B cell (primary cell): ENCODE measurements at regions of chr7 and their contacts with region 1.

Region 1: GRCh38 chr7:28096713-28097112 is 83.9 kb downstream of the JAZF1 start:
- DNase-seq: peak; percentile 69
- ATAC-seq: peak; percentile 68
- H3K4me3 ChIP-seq: no peak overlapping the region
- H3K4me3 Mint-ChIP-seq: no peak overlapping the region
- H3K27ac ChIP-seq: no peak overlapping the region
- H3K27ac Mint-ChIP-seq: no peak overlapping the region
- H3K4me1 ChIP-seq: peaks cover 13 to 14% of the 10 kb centered on the region in 2 donors
- H3K4me1 Mint-ChIP-seq: peaks cover 38% of the 10 kb centered on the region
- H3K27me3 ChIP-seq: no peaks in the 10 kb centered on the region
- H3K27me3 Mint-ChIP-seq: no peaks in the 10 kb centered on the region
- CTCF ChIP-seq: peak; percentile 99

Region 2: GRCh38 chr7:27714831-27715444 is 381.8 kb before region 1 on chr7:
- CTCF ChIA-PET with region 1: no interaction called
- POLR2A ChIA-PET with region 1: no interaction called
- intact Hi-C with region 1: no loop called
- DNase-seq: no peak
- ATAC-seq: no peak
- H3K4me3 ChIP-seq: no peak overlapping the region
- H3K4me3 Mint-ChIP-seq: no peak overlapping the region
- H3K27ac ChIP-seq: no peak overlapping the region
- H3K27ac Mint-ChIP-seq: no peak overlapping the region
- H3K4me1 ChIP-seq: no peaks in the 10 kb centered on the region
- H3K4me1 Mint-ChIP-seq: peaks cover 2% of the 10 kb centered on the region
- H3K27me3 ChIP-seq: peaks cover 0 to 3% (median 0%) of the 10 kb centered on the region in 4 experiments
- H3K27me3 Mint-ChIP-seq: peaks cover 13% of the 10 kb centered on the region
- CTCF ChIP-seq: no peak

Region 3: DNA sequence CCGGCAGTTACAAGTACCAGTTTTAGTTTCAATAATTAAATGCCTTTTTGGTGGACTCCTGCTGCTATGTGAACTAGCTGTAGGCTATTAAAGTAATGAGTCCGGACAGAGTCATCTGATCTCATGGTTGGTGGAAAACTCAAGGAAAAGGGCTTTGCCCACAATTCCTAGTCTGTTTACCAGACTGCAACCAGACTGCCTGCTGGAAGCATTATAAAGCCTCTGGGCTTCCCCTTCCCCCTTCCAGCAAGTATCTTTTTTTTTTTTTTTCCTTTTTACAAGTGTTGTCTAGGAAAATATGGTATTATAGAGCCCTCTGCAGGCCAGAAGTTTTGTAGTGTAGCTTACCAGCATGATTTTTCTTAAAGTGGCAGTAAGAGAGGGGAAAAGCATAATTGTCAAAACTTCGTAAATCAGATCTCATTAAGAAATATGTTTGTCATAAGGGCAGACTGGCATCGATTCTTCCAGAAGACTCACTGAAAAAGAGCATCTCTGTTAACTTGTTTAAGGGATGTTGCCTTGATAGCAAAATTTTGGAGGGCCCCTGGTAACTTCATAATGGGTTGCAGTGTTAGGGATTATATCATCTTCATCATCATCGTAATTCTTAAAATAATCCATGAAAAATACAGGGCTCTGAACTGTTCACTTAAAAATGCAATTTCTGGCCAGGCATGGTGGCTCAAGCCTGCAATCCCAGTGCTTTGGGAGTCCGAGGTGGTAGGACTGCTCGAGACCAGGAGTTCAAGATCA is 175.5 kb before region 1 on chr7:
- CTCF ChIA-PET with region 1: interaction called, 3 read pairs
- POLR2A ChIA-PET with region 1: no interaction called
- intact Hi-C with region 1: loop called (anchors 10 kb)
- DNase-seq: peak; percentile 68
- ATAC-seq: peak; percentile 60
- H3K4me3 ChIP-seq: no peak overlapping the region
- H3K4me3 Mint-ChIP-seq: no peak overlapping the region
- H3K27ac ChIP-seq: no peak overlapping the region
- H3K27ac Mint-ChIP-seq: no peak overlapping the region
- H3K4me1 ChIP-seq: peaks cover 35 to 39% of the 10 kb centered on the region in 2 donors
- H3K4me1 Mint-ChIP-seq: peaks cover 67% of the 10 kb centered on the region
- H3K27me3 ChIP-seq: no peaks in the 10 kb centered on the region
- H3K27me3 Mint-ChIP-seq: no peaks in the 10 kb centered on the region
- CTCF ChIP-seq: peak; percentile 71

Region 4: DNA sequence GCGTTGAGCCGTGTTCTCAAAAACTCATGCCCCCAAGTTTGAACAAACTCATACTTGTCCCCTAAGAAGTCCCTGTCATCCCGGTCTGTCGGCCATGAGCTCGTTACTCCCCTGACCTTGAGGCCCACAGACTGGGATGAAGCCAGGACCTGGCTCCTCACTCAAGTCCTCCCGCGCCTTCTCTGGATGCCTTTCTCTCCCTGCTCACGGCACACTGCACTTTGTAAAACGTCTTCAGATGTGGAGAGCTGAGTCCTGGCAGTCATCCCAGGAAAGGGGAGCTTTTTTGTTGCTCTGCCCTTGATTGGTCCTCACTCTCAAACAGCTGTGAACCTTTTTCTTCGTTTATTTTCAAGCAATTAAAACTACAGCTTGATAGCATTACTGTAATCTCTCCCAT is 26.9 kb before region 1 on chr7:
- CTCF ChIA-PET with region 1: interaction called, 10 read pairs
- POLR2A ChIA-PET with region 1: no interaction called
- intact Hi-C with region 1: no loop called
- DNase-seq: no peak
- ATAC-seq: no peak
- H3K4me3 ChIP-seq: no peak overlapping the region
- H3K4me3 Mint-ChIP-seq: no peak overlapping the region
- H3K27ac ChIP-seq: no peak overlapping the region
- H3K27ac Mint-ChIP-seq: no peak overlapping the region
- H3K4me1 ChIP-seq: peaks cover 0 to 6% of the 10 kb centered on the region in 2 donors
- H3K4me1 Mint-ChIP-seq: peaks cover 41% of the 10 kb centered on the region
- H3K27me3 ChIP-seq: no peaks in the 10 kb centered on the region
- H3K27me3 Mint-ChIP-seq: no peaks in the 10 kb centered on the region
- CTCF ChIP-seq: no peak

Region 5: DNA sequence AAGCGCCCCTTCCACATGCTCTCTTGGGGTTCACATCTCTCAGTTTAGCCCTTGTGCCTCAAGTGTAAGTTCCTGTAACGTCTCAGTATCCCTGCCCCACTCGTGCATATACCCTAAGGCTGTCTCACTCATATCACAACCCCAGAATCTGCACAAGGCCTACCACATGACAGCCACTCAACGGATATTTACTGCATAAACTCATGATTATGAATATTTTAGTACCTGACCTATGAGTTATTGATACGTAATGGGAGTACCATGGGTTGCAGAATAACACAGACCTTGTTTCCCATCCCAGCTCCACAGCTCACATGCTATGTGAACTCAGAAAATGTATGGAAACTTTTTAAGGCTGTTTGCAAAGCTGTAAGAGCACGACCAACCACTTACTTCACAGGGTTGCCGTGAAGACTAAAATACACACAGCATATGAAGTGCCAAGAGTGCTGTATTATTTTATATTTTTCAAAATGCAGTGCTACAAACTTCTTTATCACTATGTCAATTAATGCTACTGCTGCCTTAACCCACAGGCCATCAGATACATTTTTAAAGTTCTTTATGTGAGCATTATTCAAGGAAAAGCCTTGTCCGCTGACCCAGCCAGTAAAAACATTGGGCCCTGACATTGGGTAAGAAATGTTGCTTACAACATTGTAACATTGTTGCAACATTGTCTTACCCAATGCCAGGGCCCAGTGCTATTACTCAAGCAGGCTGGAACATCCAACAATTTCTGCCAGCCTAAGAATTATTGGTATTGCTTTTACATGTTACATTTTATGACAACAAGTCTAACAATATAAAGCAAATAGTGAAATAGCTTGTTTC is 13.3 kb before region 1 on chr7:
- CTCF ChIA-PET with region 1: interaction called, 60 read pairs
- POLR2A ChIA-PET with region 1: no interaction called
- intact Hi-C with region 1: no loop called
- DNase-seq: no peak
- ATAC-seq: no peak
- H3K4me3 ChIP-seq: no peak overlapping the region
- H3K4me3 Mint-ChIP-seq: no peak overlapping the region
- H3K27ac ChIP-seq: no peak overlapping the region
- H3K27ac Mint-ChIP-seq: no peak overlapping the region
- H3K4me1 ChIP-seq: peaks cover 19 to 26% of the 10 kb centered on the region in 2 donors
- H3K4me1 Mint-ChIP-seq: peaks cover 64% of the 10 kb centered on the region
- H3K27me3 ChIP-seq: no peaks in the 10 kb centered on the region
- H3K27me3 Mint-ChIP-seq: no peaks in the 10 kb centered on the region
- CTCF ChIP-seq: no peak

Region 6: GRCh38 chr7:28130277-28130676 is 33.6 kb after region 1 on chr7:
- CTCF ChIA-PET with region 1: interaction called, 15 read pairs
- POLR2A ChIA-PET with region 1: no interaction called
- intact Hi-C with region 1: no loop called
- DNase-seq: no peak
- ATAC-seq: no peak
- H3K4me3 ChIP-seq: no peak overlapping the region
- H3K4me3 Mint-ChIP-seq: no peak overlapping the region
- H3K27ac ChIP-seq: no peak overlapping the region
- H3K27ac Mint-ChIP-seq: no peak overlapping the region
- H3K4me1 ChIP-seq: peaks cover 43 to 62% of the 10 kb centered on the region in 2 donors
- H3K4me1 Mint-ChIP-seq: peaks cover 70% of the 10 kb centered on the region
- H3K27me3 ChIP-seq: no peaks in the 10 kb centered on the region
- H3K27me3 Mint-ChIP-seq: no peaks in the 10 kb centered on the region
- CTCF ChIP-seq: no peak

Region 7: GRCh38 chr7:28179120-28180030 is 82.7 kb after region 1 on chr7:
- CTCF ChIA-PET with region 1: interaction called, 7 read pairs
- POLR2A ChIA-PET with region 1: no interaction called
- intact Hi-C with region 1: loop called (anchors 5 kb)
- DNase-seq: peak; percentile 87
- ATAC-seq: peak; percentile 69
- H3K4me3 ChIP-seq: peak overlapping the region; percentile 35 to 70 (median 53)
- H3K4me3 Mint-ChIP-seq: peak overlapping the region; percentile 83
- H3K27ac ChIP-seq: peak overlapping the region; percentile 5 to 76
- H3K27ac Mint-ChIP-seq: peak overlapping the region; percentile 75
- H3K4me1 ChIP-seq: peaks cover 49 to 70% of the 10 kb centered on the region in 2 donors
- H3K4me1 Mint-ChIP-seq: peaks cover 71% of the 10 kb centered on the region
- H3K27me3 ChIP-seq: no peaks in the 10 kb centered on the region
- H3K27me3 Mint-ChIP-seq: no peaks in the 10 kb centered on the region
- CTCF ChIP-seq: no peak